ENCODE measurements at regions of chr11 and their contacts with region 1.

Region 1: DNA sequence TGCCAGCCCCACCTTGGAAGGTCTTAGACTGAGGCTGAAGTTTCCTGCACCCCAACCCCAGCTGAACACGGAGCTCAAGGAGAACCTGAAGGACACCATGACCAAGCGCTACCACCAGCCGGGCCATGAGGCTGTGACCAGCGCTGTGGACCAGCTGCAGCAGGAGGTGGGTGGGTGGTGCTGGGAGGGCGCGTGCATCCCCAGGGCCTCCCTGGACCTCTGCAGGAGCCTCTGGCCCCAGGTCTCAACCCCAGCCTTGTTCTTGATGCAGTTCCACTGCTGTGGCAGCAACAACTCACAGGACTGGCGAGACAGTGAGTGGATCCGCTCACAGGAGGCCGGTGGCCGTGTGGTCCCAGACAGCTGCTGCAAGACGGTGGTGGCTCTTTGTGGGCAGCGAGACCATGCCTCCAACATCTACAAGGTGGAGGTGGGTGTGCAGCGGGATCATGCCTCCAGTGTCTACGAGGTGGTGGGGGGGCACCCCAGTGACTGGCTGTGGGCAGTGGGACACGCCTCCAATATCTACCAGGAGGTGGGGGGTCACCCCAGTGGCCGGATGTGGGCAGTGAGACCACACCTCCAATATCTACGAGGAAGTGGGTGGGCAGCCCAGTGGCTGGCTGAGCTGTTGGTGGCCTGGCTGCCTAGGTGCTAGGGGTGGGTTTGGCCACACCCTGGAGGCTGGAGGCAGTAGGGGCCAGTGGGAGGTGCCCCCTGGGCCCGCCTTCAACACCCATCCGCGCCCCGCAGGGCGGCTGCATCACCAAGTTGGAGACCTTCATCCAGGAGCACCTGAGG is 4.6 kb downstream of the CD151 start:
- DNase-seq: no peak
- ATAC-seq: no peak
- H3K4me3 ChIP-seq: no peak overlapping the region
- H3K4me3 Mint-ChIP-seq: no peak overlapping the region
- H3K27ac ChIP-seq: no peak overlapping the region
- H3K27ac Mint-ChIP-seq: no peak overlapping the region
- H3K4me1 ChIP-seq: peaks cover 2 to 57% of the 10 kb centered on the region in 2 experiments
- H3K4me1 Mint-ChIP-seq: peaks cover 14 to 30% (median 20%) of the 10 kb centered on the region in 3 donors
- H3K27me3 ChIP-seq: peaks cover 0 to 17% of the 10 kb centered on the region in 2 experiments
- H3K27me3 Mint-ChIP-seq: no peaks in the 10 kb centered on the region

Region 2: DNA sequence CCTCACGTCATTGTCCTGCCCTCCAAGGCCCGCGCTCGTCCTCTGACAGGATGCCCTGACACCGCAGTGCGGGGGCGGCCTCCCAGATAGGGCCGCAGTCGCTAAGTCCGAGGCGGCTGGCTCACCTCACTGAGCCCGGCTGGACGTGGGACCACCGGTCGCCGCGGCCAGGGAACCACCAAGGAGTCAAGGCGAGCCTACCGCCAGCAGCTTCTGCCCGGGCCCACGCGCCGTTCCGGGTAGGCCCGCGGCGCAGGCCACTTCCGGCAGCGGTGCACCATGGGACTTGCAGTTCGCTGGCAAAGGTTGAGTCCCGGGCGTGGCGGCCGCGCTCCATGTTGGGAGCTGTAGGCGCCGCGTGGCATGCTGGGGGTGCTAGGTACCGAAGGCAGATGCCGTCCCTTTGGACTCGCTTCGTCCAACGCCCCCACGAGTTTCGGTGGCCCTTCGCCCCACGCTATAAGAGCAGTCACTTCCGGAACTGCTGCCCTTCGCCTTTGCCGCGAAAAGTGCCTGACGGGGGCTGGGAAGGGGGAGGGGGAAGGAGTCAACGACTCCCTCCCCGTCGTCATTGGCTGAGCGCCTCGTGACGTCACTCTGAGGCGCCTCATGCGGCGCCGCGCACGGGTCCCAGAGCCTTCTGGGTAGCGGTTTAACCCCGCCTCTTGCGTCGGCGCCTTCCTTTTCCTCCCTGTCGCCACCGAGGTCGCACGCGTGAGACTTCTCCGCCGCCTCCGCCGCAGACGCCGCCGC is 27.9 kb before region 1 on chr11 and contains the start of gene RPLP2:
- CTCF ChIA-PET with region 1: interaction called in 1 of 2 experiments, 10 read pairs
- POLR2A ChIA-PET with region 1: no interaction called
- DNase-seq: peak; percentile 93 to 99 (median 97)
- ATAC-seq: peak; percentile 84 to 87 (median 85)
- H3K4me3 ChIP-seq: peak within 1 kb of the TSS; percentile 85 to 97
- H3K4me3 Mint-ChIP-seq: peak within 1 kb of the TSS; percentile 89 to 91 (median 89)
- H3K27ac ChIP-seq: peak within 1 kb of the TSS; percentile 97
- H3K27ac Mint-ChIP-seq: peak within 1 kb of the TSS; percentile 94 to 99
- H3K4me1 ChIP-seq: peaks cover 15 to 46% of the 10 kb centered on the region in 2 experiments
- H3K4me1 Mint-ChIP-seq: peaks cover 36 to 40% (median 39%) of the 10 kb centered on the region in 3 donors
- H3K27me3 ChIP-seq: no peaks in the 10 kb centered on the region
- H3K27me3 Mint-ChIP-seq: no peaks in the 10 kb centered on the region
- total RNA-seq, gene RPLP2: 4,736 to 5,826 (median 5,260) TPM

Region 3: GRCh38 chr11:898143-898511 is 60.7 kb after region 1 on chr11:
- CTCF ChIA-PET with region 1: no interaction called
- POLR2A ChIA-PET with region 1: no interaction called
- DNase-seq: no peak
- ATAC-seq: no peak
- H3K4me3 ChIP-seq: no peak overlapping the region
- H3K4me3 Mint-ChIP-seq: no peak overlapping the region
- H3K27ac ChIP-seq: no peak overlapping the region
- H3K27ac Mint-ChIP-seq: no peak overlapping the region
- H3K4me1 ChIP-seq: no peaks in the 10 kb centered on the region
- H3K4me1 Mint-ChIP-seq: peaks cover 0 to 7% (median 3%) of the 10 kb centered on the region in 3 donors
- H3K27me3 ChIP-seq: no peaks in the 10 kb centered on the region
- H3K27me3 Mint-ChIP-seq: no peaks in the 10 kb centered on the region

Measured in T-cell (primary cell).